Aorta (tissue), 5 donors: ENCODE measurements at regions of chr10 and their contacts with region 1.

Region 1: DNA sequence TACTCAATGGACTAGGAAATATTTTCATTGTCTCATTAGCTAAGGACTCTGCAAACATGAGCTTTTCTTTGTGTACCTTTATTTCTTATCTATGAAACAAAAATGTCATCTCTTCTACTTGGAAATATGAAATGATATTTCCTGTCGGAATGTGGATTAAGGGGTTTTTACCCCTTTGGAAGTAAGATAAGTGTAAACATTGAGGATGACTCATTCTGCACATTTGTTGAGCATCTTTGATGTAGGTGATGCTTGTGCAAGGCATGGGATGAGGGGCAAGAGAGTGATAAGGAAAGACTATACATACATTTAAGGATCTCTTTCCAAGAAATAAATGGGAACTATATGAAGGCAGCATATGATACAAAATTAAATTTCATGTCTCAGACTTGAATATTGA is 10.9 kb downstream of the GJD4 start:
- DNase-seq: no peak
- ATAC-seq: no peak
- H3K4me3 ChIP-seq: no peak overlapping the region
- H3K27ac ChIP-seq: no peak overlapping the region
- H3K4me1 ChIP-seq: no peaks in the 10 kb centered on the region
- H3K27me3 ChIP-seq: peaks cover 0 to 3% of the 10 kb centered on the region in 2 donors

Region 2: GRCh38 chr10:35244549-35244948 is 371.5 kb before region 1 on chr10:
- intact Hi-C with region 1: loop called in 1 of 2 experiments (anchors 5 kb)
- DNase-seq: no peak
- ATAC-seq: no peak
- H3K4me3 ChIP-seq: no peak overlapping the region
- H3K27ac ChIP-seq: no peak overlapping the region
- H3K4me1 ChIP-seq: no peaks in the 10 kb centered on the region
- H3K27me3 ChIP-seq: peaks cover 0 to 1% of the 10 kb centered on the region in 2 donors

Region 3: DNA sequence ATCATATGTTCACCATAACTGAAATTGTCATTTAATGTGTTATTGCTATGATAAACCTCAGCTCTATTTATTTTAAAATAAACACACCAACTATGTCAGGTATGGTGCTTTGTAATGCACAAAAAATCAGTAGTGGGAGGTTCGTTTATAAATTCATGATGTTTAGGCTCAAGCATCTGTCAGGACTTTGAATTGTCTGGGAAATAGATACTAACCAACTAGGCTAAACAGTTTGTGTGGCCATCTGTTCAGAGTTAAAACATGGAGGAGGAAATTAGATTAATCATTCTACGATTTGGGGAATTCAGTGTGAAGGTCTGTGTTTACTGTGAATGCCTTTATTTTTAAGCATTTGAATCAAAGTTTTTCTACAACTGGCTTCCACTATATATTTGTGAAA is 238.7 kb after region 1 on chr10:
- intact Hi-C with region 1: no loop called
- DNase-seq: no peak
- ATAC-seq: no peak
- H3K4me3 ChIP-seq: no peak overlapping the region
- H3K27ac ChIP-seq: no peak overlapping the region
- H3K4me1 ChIP-seq: peaks cover 0 to 3% of the 10 kb centered on the region in 2 donors
- H3K27me3 ChIP-seq: no peaks in the 10 kb centered on the region